ENCODE measurements at regions of chr3 and their contacts with region 1.

Region 1: DNA sequence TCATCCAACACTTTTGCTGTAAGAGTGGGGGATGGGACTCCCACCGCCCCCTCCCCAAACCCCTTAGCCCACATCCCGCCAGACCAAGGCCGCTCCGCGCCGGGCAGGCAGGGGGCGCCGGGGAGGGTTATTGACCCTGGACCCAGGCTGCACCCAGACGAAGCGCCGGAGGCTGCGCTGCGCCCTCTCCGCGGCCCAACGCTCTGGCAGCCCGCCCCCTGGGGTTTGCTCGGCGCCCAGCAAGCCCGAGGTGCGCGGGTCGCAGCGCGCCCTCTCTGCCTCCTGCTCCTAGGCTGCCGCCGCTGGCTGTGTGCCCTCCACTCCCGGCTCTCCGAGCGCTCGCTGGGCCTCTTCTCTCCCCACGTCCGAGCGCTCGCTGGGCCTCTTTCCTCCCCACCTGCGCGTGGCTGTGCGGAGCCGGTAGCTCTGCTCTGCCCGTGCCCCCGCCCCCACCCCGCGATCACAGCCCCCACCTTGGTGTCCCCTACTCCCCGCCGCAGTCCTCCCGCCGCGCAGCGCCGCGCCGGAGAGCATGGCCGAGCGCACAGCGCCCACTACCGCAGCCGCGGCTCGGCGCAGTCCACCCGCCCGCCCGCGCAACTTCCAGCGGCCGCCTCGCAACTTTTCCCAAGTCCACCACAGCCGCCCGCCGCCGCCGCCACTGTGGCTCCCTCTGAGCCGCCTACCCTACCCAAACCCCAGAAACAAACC is 1.2 kb downstream of the MECOM start:
- DNase-seq: peak; percentile 73
- H3K4me3 ChIP-seq: peak overlapping the region; percentile 42 to 61 (median 51)
- H3K27ac ChIP-seq: no peak overlapping the region
- H3K4me1 ChIP-seq: peaks cover 14% of the 10 kb centered on the region
- H3K27me3 ChIP-seq: peaks cover 68% of the 10 kb centered on the region
- CTCF ChIP-seq: peak; percentile 10 to 51

Region 2: DNA sequence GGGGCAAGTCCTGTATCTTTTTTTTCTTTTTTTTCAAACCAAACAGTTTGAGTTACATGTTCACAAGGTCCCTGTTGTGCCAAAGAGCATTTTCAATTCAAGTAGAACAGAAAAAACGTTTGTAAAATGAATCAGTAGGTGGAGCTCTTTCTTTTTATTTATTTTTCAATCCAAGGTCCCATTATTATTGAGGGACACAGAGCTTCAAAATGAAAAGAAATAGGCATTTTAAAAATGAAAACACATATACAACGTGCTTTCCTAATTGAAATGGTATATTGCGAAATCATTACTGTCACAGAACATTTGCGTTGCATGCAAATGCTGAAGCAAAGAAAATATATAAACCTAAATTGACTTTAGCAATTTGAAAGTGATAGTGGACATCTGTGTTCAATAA is 709.7 kb before region 1 on chr3:
- CTCF ChIA-PET with region 1: no interaction called
- dilution Hi-C with region 1: no loop called
- in situ Hi-C with region 1: no loop called
- intact Hi-C with region 1: loop called (anchors 2 kb)
- DNase-seq: peak; percentile 37
- H3K4me3 ChIP-seq: no peak overlapping the region
- H3K27ac ChIP-seq: peak overlapping the region; percentile 60
- H3K4me1 ChIP-seq: peaks cover 25% of the 10 kb centered on the region
- H3K27me3 ChIP-seq: no peaks in the 10 kb centered on the region
- CTCF ChIP-seq: peak; percentile 17 to 32

Region 3: DNA sequence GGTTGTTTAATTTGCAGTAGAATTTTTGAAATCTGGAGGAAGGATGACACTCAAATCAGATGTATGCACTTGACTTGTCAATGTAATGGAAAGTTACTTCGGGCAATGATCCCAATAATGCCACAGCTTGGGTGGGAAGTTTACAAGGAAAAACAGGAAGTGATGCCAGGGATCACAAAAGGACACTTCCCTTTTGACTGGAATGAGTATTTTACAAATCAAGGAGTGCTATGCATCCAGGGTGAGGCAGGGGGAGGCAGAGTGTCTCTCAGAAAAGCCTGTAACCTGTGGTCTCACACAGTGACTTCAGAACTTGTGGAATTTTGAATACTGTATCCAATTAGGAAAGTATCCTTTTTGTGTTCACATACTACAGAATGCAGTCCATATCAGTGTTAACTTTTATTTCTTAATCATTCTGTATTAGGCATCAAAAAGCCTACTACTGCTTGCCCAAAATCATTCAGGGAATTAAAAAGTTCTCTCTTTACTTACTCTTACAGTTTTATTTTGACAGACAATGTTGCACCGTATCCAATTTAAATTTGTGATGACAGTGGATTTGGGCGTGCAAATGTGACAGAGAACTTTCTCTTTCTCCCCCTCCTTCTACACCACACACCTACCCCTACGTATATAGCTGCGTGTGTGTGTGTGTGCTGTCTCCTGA is 443.8 kb before region 1 on chr3:
- CTCF ChIA-PET with region 1: no interaction called
- dilution Hi-C with region 1: no loop called
- in situ Hi-C with region 1: no loop called
- intact Hi-C with region 1: loop called (anchors 1 kb)
- DNase-seq: peak; percentile 27
- H3K4me3 ChIP-seq: no peak overlapping the region
- H3K27ac ChIP-seq: no peak overlapping the region
- H3K4me1 ChIP-seq: no peaks in the 10 kb centered on the region
- H3K27me3 ChIP-seq: no peaks in the 10 kb centered on the region
- CTCF ChIP-seq: peak; percentile 47 to 67

Region 4: DNA sequence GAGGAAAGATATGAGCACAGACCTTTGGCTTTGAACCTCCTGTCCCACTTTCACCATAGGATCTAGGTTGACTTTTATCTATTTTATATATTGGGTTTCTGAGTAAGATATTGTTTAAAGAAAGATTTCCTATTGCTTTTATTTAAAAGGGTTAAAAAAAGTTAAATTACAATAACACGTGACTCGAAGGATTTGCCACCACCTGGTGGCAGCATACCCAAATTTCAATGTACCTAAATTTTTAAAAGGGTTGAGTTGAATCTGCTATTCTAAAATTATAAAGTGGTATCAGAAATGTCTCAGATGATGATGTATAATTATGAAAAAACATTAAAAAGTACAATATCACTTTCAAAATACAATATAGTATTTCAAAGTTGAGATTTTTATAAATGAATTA is 367.2 kb before region 1 on chr3:
- CTCF ChIA-PET with region 1: no interaction called
- dilution Hi-C with region 1: no loop called
- in situ Hi-C with region 1: no loop called
- intact Hi-C with region 1: loop called (anchors 2 kb)
- DNase-seq: no peak
- H3K4me3 ChIP-seq: no peak overlapping the region
- H3K27ac ChIP-seq: no peak overlapping the region
- H3K4me1 ChIP-seq: no peaks in the 10 kb centered on the region
- H3K27me3 ChIP-seq: no peaks in the 10 kb centered on the region
- CTCF ChIP-seq: peak; percentile 21 to 43

Region 5: GRCh38 chr3:169575373-169575772 is 86.9 kb before region 1 on chr3:
- CTCF ChIA-PET with region 1: no interaction called
- dilution Hi-C with region 1: no loop called
- in situ Hi-C with region 1: no loop called
- intact Hi-C with region 1: loop called (anchors 5 kb)
- DNase-seq: peak; percentile 81
- H3K4me3 ChIP-seq: no peak overlapping the region
- H3K27ac ChIP-seq: no peak overlapping the region
- H3K4me1 ChIP-seq: no peaks in the 10 kb centered on the region
- H3K27me3 ChIP-seq: no peaks in the 10 kb centered on the region
- CTCF ChIP-seq: no peak

Measured in mammary epithelial cell (primary cell).